ENCODE measurements at regions of chr4 and their contacts with region 1.

Region 1: DNA sequence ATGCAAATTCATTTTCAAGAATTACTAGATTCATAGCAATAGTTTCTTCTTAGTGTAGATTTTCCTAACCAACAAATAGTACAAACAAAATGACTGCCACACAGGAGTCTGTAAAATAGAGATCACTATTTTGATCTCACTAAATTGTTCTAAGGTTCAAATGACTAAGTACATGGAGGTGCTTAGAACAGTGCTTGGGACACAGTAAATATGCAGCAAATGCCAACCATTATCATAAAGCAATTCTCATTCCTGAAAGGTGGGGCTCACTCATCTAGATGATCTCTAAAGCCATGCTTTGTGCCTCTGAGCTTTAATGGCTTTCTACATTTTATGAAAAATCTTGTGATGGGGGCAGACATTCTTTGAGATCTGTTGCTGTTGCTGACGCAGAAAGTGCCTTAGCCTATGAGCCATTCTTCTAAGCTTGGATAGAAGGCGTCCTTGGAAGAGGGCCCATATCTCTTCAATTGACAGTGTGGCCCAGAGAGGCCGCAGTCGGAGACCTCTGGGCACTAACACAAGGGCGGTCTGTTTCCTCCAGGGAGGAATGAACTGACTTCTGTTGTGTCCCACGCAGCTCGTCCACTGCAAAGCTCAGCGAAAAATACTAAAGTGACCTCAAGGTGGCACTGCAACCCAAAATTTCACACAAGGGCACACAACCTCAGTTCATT is 23.5 kb downstream of the TLR10 start:
- DNase-seq: peak; percentile 31 to 75
- ATAC-seq: peak; percentile 75 to 92 (median 86)
- H3K4me3 ChIP-seq: no peak overlapping the region
- H3K27ac ChIP-seq: peak overlapping the region in 1 of 10 donors; percentile 10
- H3K4me1 ChIP-seq: peaks cover 0 to 43% (median 4%) of the 10 kb centered on the region in 9 donors
- H3K27me3 ChIP-seq: no peaks in the 10 kb centered on the region
- CTCF ChIP-seq: peak; percentile 50 to 83 (median 75)

Region 2: DNA sequence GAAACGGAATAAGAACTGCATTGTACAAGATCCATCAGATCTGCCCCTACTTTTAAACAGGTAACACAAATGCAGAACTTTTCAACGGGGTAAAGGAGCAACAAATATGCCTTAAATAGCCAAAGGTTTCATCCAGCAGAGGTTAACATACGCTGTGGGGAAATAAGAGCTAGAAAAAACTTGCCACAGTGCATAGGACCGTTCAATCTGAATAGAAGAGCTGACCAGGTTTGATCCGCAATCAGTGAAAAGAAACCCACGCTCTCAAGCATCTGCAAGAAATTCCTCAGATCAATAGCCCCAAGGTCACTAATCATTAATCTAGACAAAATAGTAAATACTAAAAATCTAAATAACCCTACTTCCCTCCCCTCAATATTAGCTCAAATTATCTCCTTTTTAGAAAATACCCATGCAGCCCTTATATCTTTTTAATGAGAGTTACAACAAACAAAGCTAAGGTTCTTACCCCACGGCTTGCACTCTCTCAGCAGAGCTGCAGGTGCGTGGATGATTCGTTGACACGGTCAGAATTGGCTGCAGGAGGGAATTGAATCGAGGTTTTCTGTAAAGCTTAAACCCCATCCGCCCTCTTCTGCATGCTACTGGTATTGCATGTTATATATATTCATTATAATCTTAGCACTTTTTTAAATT is 23.3 kb after region 1 on chr4 and contains the start of gene TLR10:
- intact Hi-C with region 1: loop called in 1 of 10 experiments (anchors 2 kb)
- DNase-seq: peak in 1 of 2 donors; percentile 48
- ATAC-seq: peak in 6 of 8 donors; percentile 37 to 67 (median 59)
- H3K4me3 ChIP-seq: no peak within 1 kb of the TSS
- H3K27ac ChIP-seq: no peak within 1 kb of the TSS
- H3K4me1 ChIP-seq: peaks cover 0 to 32% (median 0%) of the 10 kb centered on the region in 9 donors
- H3K27me3 ChIP-seq: no peaks in the 10 kb centered on the region
- CTCF ChIP-seq: peak; percentile 64 to 80 (median 74)
- total RNA-seq, gene TLR10: 0.06 to 0.39 (median 0.11) TPM in 4 of 10 donors, not detected in the others

Region 3: DNA sequence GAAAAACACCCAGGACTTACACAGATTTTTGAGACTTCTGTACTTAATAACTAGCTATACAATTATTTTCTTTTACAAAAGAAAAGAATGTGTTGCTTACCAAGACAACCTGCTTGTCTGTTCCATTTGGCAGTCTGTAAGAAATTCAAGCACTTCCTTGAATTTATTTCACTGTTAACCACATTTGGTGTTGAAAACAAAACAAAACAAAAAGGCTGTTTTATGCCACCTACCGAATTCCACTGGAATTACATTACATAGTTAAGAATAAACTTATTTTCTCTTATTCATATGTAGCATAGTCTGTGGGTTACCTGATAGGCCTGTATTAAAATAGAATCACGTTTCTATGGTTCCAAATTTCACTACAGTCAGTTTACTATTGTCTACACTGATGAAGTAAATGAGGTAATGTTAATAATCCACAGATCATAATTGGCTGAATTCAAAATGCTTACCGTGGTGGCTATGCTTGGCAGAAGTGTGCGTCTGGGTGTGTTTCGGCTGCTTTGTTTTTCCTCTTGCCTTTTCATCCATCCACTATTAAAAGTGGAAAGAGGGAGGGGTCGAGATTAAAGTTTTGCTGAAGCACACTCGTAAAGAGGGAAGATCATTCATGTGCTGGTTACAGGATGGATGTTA is 45.5 kb after region 1 on chr4 and contains the start of gene TLR1:
- intact Hi-C with region 1: loop called in 2 of 10 experiments (anchors 2 to 5 kb)
- DNase-seq: peak in 1 of 2 donors; percentile 19
- ATAC-seq: peak in 7 of 8 donors; percentile 37 to 71 (median 57)
- H3K4me3 ChIP-seq: peak within 1 kb of the TSS in 9 of 10 donors; percentile 4 to 54 (median 40)
- H3K27ac ChIP-seq: peak within 1 kb of the TSS; percentile 4 to 90 (median 64)
- H3K4me1 ChIP-seq: peaks cover 0 to 52% (median 13%) of the 10 kb centered on the region in 9 donors
- H3K27me3 ChIP-seq: no peaks in the 10 kb centered on the region
- CTCF ChIP-seq: peak; percentile 34 to 68 (median 58)
- total RNA-seq, gene TLR1: 0.93 to 14.0 (median 3.1) TPM

Region 4: DNA sequence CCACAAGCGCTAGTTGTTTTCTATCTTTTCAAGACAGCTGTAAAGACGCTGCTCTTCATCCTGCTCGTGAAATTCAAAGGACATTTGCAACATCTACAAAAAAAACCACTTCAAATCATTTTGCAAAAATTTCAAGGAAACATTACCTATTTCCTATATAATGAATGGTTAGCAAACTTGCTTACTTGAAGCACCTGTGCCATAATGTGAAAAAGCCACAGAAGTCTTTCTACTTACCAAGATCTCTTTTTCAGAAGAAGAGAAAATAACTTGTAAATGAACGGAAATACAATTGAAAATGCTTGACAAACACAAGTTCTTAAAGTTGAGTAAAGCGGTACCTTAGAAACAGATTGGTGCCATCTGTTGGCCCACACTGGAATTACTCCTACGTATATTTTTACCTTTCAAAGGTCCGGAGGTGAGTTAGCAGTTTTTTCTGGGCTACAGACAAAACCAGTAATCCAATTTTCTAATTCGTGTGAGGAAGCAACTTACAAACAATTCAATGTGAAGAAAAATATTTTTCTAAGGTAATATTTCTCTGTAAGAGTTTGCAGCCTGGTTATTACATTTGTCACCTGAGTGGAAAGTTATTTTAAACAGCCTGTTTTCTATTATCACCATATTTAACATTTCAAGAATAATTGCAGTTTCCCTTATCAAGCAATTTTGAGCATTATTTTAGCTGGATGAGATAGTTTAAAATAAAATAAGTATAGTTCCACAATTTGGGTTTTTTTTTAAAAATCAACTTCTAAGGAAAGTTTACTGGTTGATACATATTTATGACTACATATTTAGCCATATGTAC is 97.5 kb after region 1 on chr4 and contains the start of gene TLR6:
- intact Hi-C with region 1: loop called in 9 of 10 experiments (anchors 2 to 10 kb)
- DNase-seq: peak in 1 of 2 donors; percentile 53
- ATAC-seq: peak in 6 of 8 donors; percentile 36 to 74 (median 58)
- H3K4me3 ChIP-seq: peak within 1 kb of the TSS in 6 of 10 donors; percentile 24 to 53 (median 38)
- H3K27ac ChIP-seq: peak within 1 kb of the TSS in 9 of 10 donors; percentile 5 to 93 (median 47)
- H3K4me1 ChIP-seq: peaks cover 0 to 30% (median 0%) of the 10 kb centered on the region in 9 donors
- H3K27me3 ChIP-seq: no peaks in the 10 kb centered on the region
- CTCF ChIP-seq: peak; percentile 50 to 87 (median 81)
- total RNA-seq, gene TLR6: 0.96 to 3.7 (median 1.3) TPM